Adrenal gland (tissue), 19 donors: ENCODE measurements at regions of chr3 and their contacts with region 1.

Region 1: GRCh38 chr3:178966299-178967176 is 105.1 kb downstream of the ZMAT3 start:
- DNase-seq: peak in 2 of 7 donors; percentile 2 to 62
- H3K4me3 ChIP-seq: no peak overlapping the region
- H3K27ac ChIP-seq: no peak overlapping the region
- H3K4me1 ChIP-seq: peaks cover 8 to 17% of the 10 kb centered on the region in 2 donors
- H3K27me3 ChIP-seq: no peaks in the 10 kb centered on the region
- CTCF ChIP-seq: peak; percentile 18 to 63 (median 38)
- POLR2A ChIP-seq: no peak

Region 2: DNA sequence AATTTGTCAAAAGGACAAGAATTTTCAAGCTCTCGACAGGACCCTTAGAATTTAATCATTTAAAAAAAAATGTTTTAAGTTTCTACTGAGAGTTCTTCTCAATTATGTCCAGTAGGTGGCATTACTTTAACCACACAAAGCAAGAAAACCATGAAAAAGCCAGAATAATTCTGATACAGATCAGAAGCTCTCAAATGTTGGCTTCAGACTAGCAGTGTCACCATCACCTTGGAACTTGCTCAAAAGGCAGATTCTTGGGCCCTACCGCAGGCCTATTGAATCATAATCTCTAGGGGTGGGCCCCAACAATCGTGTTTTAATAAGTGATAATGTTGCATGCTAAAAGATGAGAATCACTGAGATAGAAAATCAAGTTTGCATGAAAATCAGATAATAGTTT is 529.8 kb before region 1 on chr3:
- intact Hi-C with region 1: loop called (anchors 5 to 10 kb)
- DNase-seq: no peak
- H3K4me3 ChIP-seq: no peak overlapping the region
- H3K27ac ChIP-seq: no peak overlapping the region
- H3K4me1 ChIP-seq: no peaks in the 10 kb centered on the region
- H3K27me3 ChIP-seq: no peaks in the 10 kb centered on the region
- CTCF ChIP-seq: peak; percentile 42 to 69 (median 51)
- POLR2A ChIP-seq: no peak

Region 3: GRCh38 chr3:178443634-178444033 is 522.9 kb before region 1 on chr3:
- intact Hi-C with region 1: loop called (anchors 5 to 10 kb)
- DNase-seq: no peak
- H3K4me3 ChIP-seq: no peak overlapping the region
- H3K27ac ChIP-seq: no peak overlapping the region
- H3K4me1 ChIP-seq: no peaks in the 10 kb centered on the region
- H3K27me3 ChIP-seq: no peaks in the 10 kb centered on the region
- CTCF ChIP-seq: peak in 1 of 6 experiments; percentile 20
- POLR2A ChIP-seq: no peak